SK-N-SH (cell line): ENCODE measurements at regions of chr19 and their contacts with region 1.

Region 1: DNA sequence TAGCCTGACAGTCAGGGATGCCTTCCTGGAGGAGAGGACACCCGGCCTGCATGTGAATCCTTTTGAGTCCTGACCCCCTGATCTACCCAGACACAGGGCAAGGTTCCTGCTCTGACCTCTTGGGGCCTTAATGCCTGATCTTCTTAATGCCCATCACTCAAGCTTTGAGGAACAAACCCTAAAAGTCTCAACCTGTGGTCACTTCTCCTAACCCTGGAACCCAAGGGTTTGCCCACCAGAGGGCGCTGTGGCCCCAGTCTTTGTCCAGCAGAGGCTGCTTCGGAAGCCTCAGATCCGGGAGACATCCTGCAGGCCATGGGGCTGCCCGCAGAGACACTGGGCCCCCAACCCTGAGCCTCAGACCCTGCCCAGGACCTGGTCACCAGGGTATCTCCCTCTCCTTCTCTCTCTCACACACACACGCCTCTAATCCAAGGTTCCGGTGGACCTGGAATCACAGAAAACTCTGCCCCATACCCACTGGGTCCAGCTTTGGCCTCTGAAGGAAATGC is 9.8 kb upstream of the DPF1 start:
- DNase-seq: peak; percentile 88
- H3K4me3 ChIP-seq: no peak overlapping the region; a peak in 1 of 4 replicates
- H3K27ac ChIP-seq: no peak overlapping the region
- H3K4me1 ChIP-seq: peaks cover 0 to 1% of the 10 kb centered on the region in 2 experiments; a peak in 1 of 4 replicates
- H3K27me3 ChIP-seq: no peaks in the 10 kb centered on the region
- CTCF ChIP-seq: peak; percentile 83
- EP300 ChIP-seq: no peak
- RAD21 ChIP-seq: peak; percentile 84

Region 2: GRCh38 chr19:37899966-37900365 is 333.8 kb before region 1 on chr19:
- CTCF ChIA-PET with region 1: interaction called, 41 read pairs
- POLR2A ChIA-PET with region 1: no interaction called
- DNase-seq: no peak
- H3K4me3 ChIP-seq: no peak overlapping the region
- H3K27ac ChIP-seq: no peak overlapping the region
- H3K4me1 ChIP-seq: no peaks in the 10 kb centered on the region
- H3K27me3 ChIP-seq: no peaks in the 10 kb centered on the region
- CTCF ChIP-seq: no peak
- EP300 ChIP-seq: no peak
- RAD21 ChIP-seq: no peak

Region 3: GRCh38 chr19:38209152-38209551 is 24.6 kb before region 1 on chr19:
- CTCF ChIA-PET with region 1: no interaction called
- POLR2A ChIA-PET with region 1: no interaction called
- DNase-seq: no peak
- H3K4me3 ChIP-seq: no peak overlapping the region; a peak in 1 of 4 replicates
- H3K27ac ChIP-seq: peak overlapping the region in 1 of 2 experiments; percentile 69; a peak in 1 of 4 replicates
- H3K4me1 ChIP-seq: peaks cover 4 to 22% of the 10 kb centered on the region in 2 experiments; a peak in 1 of 4 replicates
- H3K27me3 ChIP-seq: no peaks in the 10 kb centered on the region
- CTCF ChIP-seq: no peak
- EP300 ChIP-seq: no peak
- RAD21 ChIP-seq: no peak

Region 4: DNA sequence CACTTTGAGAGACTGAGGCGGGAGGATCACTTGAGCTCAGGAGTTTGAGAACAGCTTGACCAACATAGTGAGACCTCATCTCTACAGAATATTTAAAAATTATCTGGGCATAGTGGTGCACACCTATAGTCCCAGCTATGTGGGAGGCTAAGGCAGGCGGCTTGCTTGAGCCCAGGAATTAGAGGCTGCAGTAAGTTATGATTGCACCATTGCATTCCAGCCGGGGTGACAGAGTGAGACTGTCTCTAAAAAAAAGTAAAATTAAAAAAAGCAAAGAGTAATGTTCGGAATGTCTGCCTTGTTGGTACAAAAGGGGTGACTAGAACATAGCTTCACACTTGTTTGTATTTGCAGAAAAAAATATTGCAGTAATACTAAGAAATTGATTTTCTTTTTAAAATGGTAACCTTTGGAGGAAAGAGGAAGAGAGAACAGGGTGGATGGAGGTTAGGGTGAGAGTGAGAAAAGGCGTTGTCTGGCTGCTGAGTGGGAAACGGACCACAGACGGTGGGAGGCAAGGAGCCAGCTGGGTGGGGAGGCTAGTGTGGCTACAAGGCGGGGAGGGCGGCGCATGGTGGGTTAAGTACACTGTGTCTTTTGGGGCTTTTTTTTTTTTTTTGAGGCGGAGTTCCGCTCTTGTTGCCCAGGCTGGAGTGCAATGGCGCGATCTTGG is 12.2 kb after region 1 on chr19:
- CTCF ChIA-PET with region 1: interaction called, 42 read pairs
- POLR2A ChIA-PET with region 1: no interaction called
- DNase-seq: no peak
- H3K4me3 ChIP-seq: no peak overlapping the region
- H3K27ac ChIP-seq: no peak overlapping the region
- H3K4me1 ChIP-seq: peaks cover 0 to 1% of the 10 kb centered on the region in 2 experiments; a peak in 1 of 4 replicates
- H3K27me3 ChIP-seq: no peaks in the 10 kb centered on the region
- CTCF ChIP-seq: no peak
- EP300 ChIP-seq: no peak
- RAD21 ChIP-seq: no peak

Region 5: GRCh38 chr19:38250821-38251563 is 17.2 kb after region 1 on chr19:
- CTCF ChIA-PET with region 1: interaction called, 42 read pairs
- POLR2A ChIA-PET with region 1: interaction called, 4 read pairs
- DNase-seq: no peak
- H3K4me3 ChIP-seq: no peak overlapping the region
- H3K27ac ChIP-seq: no peak overlapping the region
- H3K4me1 ChIP-seq: peaks cover 0 to 16% of the 10 kb centered on the region in 2 experiments; a peak in 2 of 4 replicates
- H3K27me3 ChIP-seq: no peaks in the 10 kb centered on the region; the same call in 1 of the 2 replicates
- CTCF ChIP-seq: no peak
- EP300 ChIP-seq: no peak
- RAD21 ChIP-seq: no peak

Region 6: DNA sequence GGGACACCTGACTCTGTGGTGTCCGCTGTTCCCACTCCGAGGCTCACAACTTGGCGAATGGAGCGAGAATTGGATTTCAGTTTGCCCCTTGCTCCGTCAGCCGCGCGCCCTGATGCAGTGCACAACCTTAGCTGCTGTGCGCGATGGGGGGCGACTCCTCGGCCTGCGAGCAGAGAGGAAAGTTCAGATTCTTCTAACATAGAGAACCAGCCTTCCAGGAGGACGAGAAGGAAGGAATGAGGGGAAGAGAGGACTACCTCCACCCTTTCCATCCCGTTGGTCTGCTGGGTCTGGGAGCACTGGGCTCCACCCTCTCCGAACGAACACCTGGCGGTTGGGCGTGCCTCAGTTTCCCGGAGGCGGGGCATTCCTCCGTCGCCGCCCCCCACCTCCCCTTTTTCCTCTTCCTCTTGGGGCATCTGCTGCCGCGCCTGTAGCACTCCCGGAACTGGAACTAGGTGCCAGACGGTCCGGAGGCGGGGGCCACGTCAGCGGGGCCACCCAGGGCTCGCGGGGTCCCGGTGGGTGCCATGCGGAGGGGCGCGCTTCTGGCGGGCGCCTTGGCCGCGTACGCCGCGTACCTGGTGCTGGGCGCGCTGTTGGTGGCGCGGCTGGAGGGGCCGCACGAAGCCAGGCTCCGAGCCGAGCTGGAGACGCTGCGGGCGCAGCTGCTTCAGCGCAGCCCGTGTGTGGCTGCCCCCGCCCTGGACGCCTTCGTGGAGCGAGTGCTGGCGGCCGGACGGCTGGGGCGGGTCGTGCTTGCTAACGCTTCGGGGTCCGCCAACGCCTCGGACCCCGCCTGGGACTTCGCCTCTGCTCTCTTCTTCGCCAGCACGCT is 85.8 kb after region 1 on chr19 and contains the start of gene KCNK6:
- CTCF ChIA-PET with region 1: interaction called, 20 read pairs
- POLR2A ChIA-PET with region 1: no interaction called
- DNase-seq: peak; percentile 72
- H3K4me3 ChIP-seq: peak within 1 kb of the TSS; percentile 47 to 64
- H3K27ac ChIP-seq: no peak within 1 kb of the TSS
- H3K4me1 ChIP-seq: peaks cover 0 to 24% of the 10 kb centered on the region in 2 experiments; a peak in 1 of 4 replicates
- H3K27me3 ChIP-seq: 0 out of 2 replicates have a peak, but pooled peaks cover 15% of the 10 kb centered on the region
- CTCF ChIP-seq: no peak
- EP300 ChIP-seq: no peak
- RAD21 ChIP-seq: no peak
- polyA plus RNA-seq, gene KCNK6: 0.26 and 0.29 TPM in 2 replicates